ENCODE measurements at regions of chr9 and their contacts with region 1.

Region 1: GRCh38 chr9:36258208-36258988 is at the start of gene GNE:
- ATAC-seq: peak; percentile 82 to 95 (median 90)
- H3K4me3 ChIP-seq: peak within 1 kb of the TSS; percentile 68 to 97 (median 80)
- H3K27ac ChIP-seq: peak within 1 kb of the TSS; percentile 91 to 96
- H3K4me1 ChIP-seq: peaks cover 0 to 4% of the 10 kb centered on the region in 2 donors
- total RNA-seq, gene GNE: 17.0 to 22.7 (median 19.7) TPM

Region 2: GRCh38 chr9:36166101-36166927 is 92.1 kb before region 1 on chr9:
- in situ Hi-C with region 1: loop called in 1 of 9 experiments (anchors 25 kb)
- ATAC-seq: peak; percentile 26 to 98 (median 72)
- H3K4me3 ChIP-seq: peak overlapping the region; percentile 6 to 24 (median 18)
- H3K27ac ChIP-seq: no peak overlapping the region
- H3K4me1 ChIP-seq: peaks cover 10 to 19% of the 10 kb centered on the region in 2 donors

Region 3: DNA sequence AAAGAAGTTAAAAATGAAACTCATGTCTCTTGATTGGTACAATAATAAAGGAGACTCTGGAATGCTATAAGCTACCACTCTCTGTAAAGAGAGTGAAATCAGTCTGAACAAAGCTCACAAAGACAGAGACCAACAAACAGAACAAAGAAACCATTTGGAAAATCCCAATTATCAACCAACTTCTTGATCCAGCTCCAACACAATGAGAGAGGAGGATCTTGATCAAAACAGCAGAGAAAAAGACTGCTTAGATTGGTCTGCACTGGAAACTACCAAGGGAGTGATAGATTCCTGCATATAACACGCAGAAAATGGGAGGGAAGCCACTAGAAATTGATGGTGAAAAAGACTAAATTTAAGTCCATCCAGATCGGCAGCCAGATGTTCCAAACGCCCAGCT is 164.8 kb after region 1 on chr9:
- in situ Hi-C with region 1: no loop called
- ATAC-seq: peak in 1 of 8 experiments; percentile 16
- H3K4me3 ChIP-seq: no peak overlapping the region
- H3K27ac ChIP-seq: no peak overlapping the region
- H3K4me1 ChIP-seq: no peaks in the 10 kb centered on the region